ENCODE measurements at regions of chr1 and their contacts with region 1.

Region 1: DNA sequence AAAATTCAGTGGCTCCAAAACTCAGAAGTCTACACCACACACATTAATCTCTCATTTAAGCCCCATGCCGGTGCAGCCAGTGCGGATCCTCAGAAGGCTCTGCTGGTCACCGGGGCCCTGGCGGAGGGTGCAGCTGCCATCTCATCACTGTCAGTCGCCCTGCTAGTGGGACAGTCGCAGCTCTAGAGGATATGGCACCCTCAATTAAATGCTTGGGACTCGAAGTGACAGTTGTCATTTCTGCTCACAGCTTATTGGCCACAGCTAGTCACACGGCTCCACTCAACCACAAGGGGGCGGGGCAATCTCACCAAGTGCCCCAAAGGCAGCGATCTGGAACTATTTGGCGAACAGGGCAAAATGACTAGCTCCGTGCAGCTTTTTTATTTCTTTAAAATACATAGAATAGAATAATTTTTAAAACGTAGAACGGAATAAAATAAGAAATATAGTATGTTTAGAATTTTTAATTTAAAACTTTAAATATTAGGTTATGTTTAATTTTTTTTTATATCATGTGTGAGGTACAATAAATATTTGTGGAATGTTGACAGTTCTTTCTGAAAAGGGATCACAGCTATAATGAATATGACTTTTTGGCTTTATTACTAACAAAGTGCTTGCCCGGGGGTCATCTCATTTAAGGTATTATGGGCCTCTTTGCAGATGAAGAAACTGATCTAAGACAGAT is 8.0 kb upstream of the MAN1C1 start:
- DNase-seq: no peak
- H3K4me3 ChIP-seq: no peak overlapping the region
- H3K27ac ChIP-seq: no peak overlapping the region
- H3K27me3 ChIP-seq: peaks cover 25% of the 10 kb centered on the region
- CTCF ChIP-seq: peak; percentile 69

Region 2: DNA sequence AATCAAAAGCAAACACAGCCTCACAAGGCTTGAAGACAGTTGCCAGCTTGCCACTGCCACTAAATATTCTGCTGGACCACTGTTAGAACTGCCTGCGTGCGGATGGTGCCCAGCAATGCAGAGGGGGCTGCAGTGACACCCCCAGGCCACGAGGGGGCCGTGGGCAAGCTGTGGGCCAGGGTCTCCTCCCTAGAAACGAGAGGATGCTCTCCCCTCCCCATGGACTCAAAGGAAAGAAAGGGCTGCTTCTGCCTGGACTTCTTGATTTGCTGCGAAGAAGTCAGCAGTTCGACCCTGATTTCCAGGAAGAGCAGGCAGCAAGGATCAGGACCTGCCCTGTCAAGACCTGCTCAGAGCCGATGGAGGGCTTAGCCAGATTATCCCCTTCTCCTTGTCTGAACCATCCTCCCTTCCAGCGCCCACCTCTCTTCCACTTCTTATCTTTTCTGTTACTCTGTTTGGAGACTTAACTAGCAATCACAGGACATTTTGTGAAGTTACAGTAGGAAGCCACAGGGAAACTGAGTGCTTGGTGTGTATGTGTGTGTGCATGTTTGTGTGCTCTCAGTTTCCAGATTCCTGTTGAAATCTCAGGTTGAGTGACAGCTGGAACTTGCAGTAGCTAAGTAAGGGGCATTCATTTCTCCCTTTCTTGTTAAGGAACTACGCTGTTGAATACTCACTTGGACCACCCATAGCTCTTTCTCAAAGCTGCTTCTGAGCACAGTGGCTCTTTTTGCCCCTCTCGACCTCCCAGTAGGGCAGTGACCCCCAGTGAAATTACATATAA is 10.7 kb after region 1 on chr1:
- CTCF ChIA-PET with region 1: interaction called, 17 read pairs
- POLR2A ChIA-PET with region 1: no interaction called
- DNase-seq: no peak
- H3K4me3 ChIP-seq: peak overlapping the region; percentile 58
- H3K27ac ChIP-seq: no peak overlapping the region
- H3K27me3 ChIP-seq: peaks cover 17% of the 10 kb centered on the region
- CTCF ChIP-seq: peak; percentile 87

Region 3: DNA sequence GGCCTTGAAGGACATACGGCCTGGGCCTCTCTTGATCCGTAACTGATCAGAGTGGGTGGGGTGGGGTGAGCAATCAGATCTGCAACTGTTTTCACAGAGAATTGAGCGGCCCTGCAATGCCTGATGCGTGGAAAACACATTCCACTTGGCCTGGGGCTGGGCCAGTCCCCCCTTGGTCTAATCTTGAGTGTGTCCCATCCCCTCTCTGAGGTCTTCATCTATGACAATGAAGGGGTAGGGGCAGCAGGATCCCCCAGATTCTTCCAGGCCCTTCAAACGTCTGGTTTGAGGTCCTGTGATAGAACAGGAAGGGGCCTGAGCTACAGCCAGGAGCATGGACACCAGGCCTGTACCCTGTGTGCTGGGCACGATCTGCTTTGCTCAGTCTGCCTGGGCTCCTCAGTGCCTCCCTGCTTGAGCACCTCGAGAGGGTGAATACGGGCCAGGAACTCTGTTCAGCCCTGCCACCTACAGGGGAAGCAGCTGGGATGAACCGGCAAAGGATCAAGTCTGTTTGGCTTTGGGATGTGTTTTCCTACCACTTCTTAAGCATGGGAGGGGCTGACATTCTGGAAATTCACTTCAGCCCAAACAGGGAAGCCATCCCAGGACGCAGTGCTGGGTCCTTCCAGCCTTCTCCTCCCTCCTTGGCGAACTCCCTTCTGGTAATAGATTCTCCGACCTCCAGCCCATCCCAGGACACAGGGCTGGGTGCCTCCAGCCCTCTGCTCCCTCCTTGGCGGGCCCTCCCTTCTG is 135.4 kb after region 1 on chr1:
- CTCF ChIA-PET with region 1: interaction called, 24 read pairs
- POLR2A ChIA-PET with region 1: no interaction called
- DNase-seq: no peak
- H3K4me3 ChIP-seq: no peak overlapping the region
- H3K27ac ChIP-seq: peak overlapping the region; percentile 47
- H3K27me3 ChIP-seq: peaks cover 3% of the 10 kb centered on the region
- CTCF ChIP-seq: peak; percentile 66

Region 4: DNA sequence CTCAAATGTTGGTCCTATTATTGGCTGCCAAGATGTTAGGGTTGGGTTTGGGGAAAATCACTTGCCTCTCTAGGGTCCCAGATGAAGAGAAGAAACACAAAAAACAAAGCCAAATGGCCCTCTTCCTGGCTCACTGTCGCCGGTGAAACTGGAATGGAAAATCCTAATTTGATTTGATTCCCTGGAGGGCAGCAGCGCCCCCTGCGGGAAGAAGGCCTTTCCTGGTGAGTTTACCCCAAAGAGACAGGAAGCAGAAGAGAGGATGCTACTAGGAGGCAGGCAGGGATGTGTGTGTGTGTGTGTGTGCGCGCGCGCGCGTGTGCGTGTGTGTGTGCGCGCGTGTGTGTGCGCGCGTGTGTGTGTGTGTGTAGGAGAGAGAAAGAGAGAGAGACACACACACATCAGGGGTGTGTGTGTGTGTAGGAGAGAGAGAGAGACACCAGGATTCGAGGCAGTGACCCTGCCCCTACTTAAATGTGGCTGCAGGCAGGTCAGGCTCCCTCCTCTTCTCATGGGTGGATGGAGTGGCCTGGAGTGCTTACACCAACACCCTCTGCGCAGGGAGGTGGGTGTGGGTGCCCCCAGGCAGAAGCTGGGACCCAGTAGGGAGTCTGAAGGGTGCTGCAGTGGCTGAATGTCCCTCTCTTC is 188.3 kb after region 1 on chr1:
- CTCF ChIA-PET with region 1: interaction called, 74 read pairs
- POLR2A ChIA-PET with region 1: interaction called, 6 read pairs
- DNase-seq: no peak
- H3K4me3 ChIP-seq: no peak overlapping the region
- H3K27ac ChIP-seq: no peak overlapping the region
- H3K27me3 ChIP-seq: no peaks in the 10 kb centered on the region
- CTCF ChIP-seq: peak; percentile 89

Region 5: GRCh38 chr1:25810341-25811299 is 202.0 kb after region 1 on chr1:
- CTCF ChIA-PET with region 1: interaction called, 67 read pairs
- POLR2A ChIA-PET with region 1: no interaction called
- DNase-seq: no peak
- H3K4me3 ChIP-seq: no peak overlapping the region
- H3K27ac ChIP-seq: no peak overlapping the region
- H3K27me3 ChIP-seq: no peaks in the 10 kb centered on the region
- CTCF ChIP-seq: peak; percentile 90